ENCODE measurements at regions of chr1 and their contacts with region 1.

Region 1: GRCh38 chr1:172818841-172819527 is 160.1 kb downstream of the FASLG start:
- DNase-seq: peak; percentile 33
- H3K4me3 Mint-ChIP-seq: peak overlapping the region; percentile 46
- H3K27ac Mint-ChIP-seq: peak overlapping the region; percentile 67
- H3K4me1 Mint-ChIP-seq: peaks cover 45% of the 10 kb centered on the region
- H3K27me3 Mint-ChIP-seq: peaks cover 15% of the 10 kb centered on the region

Region 2: DNA sequence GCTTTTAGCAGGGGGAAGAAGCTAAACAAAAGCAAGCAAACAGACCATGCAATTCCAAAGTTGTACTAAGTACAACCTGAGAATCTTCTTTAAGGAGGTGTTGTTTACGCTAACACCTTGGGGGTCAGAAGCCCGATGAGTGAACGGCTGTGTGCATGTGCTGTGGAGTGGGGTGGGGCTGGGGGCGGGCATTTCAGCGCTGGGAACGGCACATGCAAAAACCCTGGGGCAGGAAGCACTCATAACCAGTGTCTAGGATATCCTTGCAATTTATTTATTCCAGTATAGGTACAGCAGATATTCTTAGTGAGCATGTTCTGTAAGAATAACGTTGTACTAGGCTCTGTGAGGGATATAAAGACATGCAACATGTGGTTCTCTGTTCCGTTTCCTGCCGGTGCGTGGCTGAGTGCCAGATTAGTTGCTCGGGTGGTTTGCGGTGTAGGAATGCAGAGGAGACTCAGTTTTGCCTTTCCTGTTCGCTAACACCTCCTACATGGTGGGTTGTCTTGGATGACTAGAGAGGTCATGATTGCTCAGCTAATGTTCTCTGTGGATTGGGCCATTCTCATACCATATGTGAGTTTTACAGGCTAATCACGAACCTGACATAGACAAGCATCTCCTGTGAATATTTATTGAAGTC is 156.4 kb before region 1 on chr1:
- intact Hi-C with region 1: loop called (anchors 5 kb)
- DNase-seq: peak; percentile 80
- H3K4me3 Mint-ChIP-seq: peak overlapping the region; percentile 90
- H3K27ac Mint-ChIP-seq: peak overlapping the region; percentile 94
- H3K4me1 Mint-ChIP-seq: peaks cover 74% of the 10 kb centered on the region
- H3K27me3 Mint-ChIP-seq: no peaks in the 10 kb centered on the region

Region 3: DNA sequence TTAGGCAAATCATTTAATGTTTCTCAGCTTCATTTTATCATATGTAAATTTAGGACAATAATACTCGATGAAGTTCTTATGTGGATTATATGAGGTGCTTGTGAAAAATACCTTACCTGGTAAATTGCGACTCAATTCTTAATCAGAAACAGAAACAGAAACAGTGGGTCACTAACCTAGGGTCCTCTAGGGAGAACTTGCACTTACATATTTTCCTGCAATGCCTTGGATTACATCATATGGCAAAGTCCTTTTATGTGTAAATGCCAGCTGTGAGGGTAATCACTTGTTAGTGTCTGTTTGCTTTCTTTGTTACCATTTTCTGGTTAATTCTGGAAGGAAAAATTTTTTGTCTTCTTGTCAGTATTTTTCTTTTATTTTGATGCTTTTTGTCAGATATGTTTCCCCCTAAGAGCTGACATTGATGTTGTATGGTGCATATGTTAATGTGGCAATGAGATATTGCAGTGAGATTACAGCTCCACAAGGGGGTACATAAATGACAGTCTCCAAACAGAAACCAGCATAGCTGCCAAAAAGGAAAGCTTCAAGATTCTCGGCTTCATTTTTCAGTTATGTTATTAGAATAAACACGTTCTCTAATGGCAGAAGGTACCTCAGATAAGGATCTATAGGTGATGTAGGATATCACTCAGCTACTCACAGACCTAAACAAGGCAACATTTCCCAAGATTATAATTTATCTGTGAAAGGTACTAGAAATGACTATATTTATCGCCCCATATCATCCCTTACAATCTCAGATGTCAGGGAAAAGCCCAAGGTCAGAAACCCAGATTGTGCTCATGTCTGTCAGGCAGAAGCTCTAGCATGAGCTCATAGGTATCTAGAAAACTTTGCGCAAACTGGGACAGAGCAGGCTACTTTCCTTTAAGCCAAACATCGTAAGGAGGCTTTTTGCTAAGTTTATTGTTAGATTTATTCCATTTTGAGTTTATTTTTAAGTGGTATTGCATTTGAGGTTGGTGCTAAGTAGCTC is 40.2 kb before region 1 on chr1:
- intact Hi-C with region 1: loop called (anchors 1 kb)
- DNase-seq: no peak
- H3K4me3 Mint-ChIP-seq: no peak overlapping the region
- H3K27ac Mint-ChIP-seq: no peak overlapping the region
- H3K4me1 Mint-ChIP-seq: peaks cover 16% of the 10 kb centered on the region
- H3K27me3 Mint-ChIP-seq: peaks cover 31% of the 10 kb centered on the region

Region 4: GRCh38 chr1:172883107-172883791 is 64.3 kb after region 1 on chr1:
- intact Hi-C with region 1: loop called (anchors 1 kb)
- DNase-seq: no peak
- H3K4me3 Mint-ChIP-seq: no peak overlapping the region
- H3K27ac Mint-ChIP-seq: peak overlapping the region; percentile 18
- H3K4me1 Mint-ChIP-seq: peaks cover 19% of the 10 kb centered on the region
- H3K27me3 Mint-ChIP-seq: peaks cover 67% of the 10 kb centered on the region

Region 5: DNA sequence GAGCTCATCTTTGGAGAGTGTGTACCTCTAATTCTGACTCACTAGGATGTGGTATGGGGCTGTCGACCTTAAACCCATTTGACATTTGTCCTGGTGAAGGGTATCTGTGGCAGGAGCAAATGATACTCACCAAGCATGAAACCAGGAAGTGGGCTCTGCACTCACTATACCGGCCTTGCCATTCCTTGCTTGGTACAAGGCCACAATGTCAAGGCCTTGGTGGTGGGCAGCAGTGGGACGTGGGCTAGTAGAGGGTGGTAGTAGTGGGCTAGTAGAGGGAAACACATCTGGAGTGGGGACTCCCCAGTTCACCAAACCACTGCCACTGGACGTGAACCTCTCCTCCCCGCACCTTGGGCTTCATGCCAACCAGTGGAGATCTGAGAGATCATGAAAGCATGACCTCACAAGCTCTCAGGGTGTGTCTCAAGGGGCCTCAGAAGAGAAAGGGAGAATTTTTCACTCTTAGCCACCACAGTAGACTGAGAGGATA is 376.7 kb after region 1 on chr1:
- intact Hi-C with region 1: loop called (anchors 1 kb)
- DNase-seq: peak; percentile 12
- H3K4me3 Mint-ChIP-seq: no peak overlapping the region
- H3K27ac Mint-ChIP-seq: peak overlapping the region; percentile 57
- H3K4me1 Mint-ChIP-seq: peaks cover 17% of the 10 kb centered on the region
- H3K27me3 Mint-ChIP-seq: peaks cover 33% of the 10 kb centered on the region

Region 6: DNA sequence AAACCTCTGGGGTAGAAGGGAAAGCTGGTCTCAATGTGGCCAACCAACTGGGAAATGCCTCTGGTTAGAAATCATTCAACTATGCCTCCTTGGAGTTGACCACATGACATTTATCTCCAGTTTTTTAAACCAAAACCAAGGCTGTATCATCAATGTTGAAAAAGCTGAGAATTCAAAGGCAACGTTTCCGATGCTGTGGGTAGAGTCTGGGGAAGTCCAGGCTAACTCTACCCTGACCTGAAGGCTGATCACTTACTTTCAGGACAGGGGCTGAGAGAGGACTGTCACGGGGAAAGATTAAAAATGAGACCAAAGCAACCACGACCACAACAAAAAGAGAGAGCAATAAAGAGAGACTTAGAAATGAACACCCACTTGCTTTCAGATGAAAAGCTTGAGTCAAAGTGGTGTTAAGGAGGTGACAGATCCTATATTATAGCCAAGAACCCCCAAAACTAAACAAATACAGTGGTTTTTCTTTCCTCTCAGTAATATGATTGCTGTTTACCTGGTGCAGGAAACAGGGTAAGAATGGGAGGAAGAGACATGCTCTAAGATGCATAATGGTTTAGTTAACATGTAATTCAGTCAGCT is 478.9 kb after region 1 on chr1:
- intact Hi-C with region 1: loop called (anchors 1 kb)
- DNase-seq: no peak
- H3K4me3 Mint-ChIP-seq: no peak overlapping the region
- H3K27ac Mint-ChIP-seq: peak overlapping the region; percentile 2
- H3K4me1 Mint-ChIP-seq: peaks cover 28% of the 10 kb centered on the region
- H3K27me3 Mint-ChIP-seq: peaks cover 37% of the 10 kb centered on the region